ENCODE measurements at regions of chr1 and their contacts with region 1.

Region 1: DNA sequence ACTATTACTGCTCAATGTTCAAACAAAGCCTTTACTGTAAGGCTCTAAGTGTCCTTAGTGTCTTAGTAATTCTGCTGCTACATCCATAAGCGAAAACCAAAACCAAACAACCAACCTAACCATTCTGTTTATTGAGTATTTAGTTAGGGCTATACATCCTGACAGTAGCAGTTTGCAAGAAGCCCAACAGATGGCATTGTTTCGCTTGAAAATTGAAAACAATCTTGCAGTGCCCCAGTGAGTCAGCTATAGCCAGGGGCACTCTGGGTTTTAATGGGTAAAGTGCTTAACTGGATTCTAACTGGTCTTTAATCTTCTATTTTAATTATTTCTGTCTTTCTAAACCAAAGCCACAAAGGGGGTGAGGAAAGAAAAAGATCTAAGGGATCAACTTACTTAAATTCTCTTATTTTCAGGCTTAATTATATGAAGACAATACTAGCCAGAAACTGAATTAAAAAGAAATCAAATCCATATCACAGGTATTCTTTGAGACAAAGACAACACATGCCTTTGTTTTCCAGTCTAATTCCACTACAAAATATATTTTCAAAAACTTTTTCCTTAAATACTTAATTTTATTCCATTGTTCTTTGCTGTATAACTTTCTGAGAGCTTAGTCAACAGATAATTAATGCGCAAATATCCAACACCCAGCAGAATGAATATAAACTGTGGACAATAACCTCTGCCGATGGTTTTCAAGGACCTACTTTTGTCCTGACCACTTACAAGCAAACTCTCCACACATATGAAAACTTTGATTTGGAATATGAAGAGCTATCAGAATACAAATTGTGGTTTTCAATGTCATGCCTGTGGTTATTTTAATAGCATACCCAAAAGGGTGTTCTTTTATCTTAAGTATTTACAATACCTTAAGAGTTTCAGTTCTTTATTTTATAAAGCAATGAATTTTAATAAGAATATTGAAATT is 15.2 kb downstream of the POGZ start:
- DNase-seq: no peak
- ATAC-seq: peak; percentile 86

Region 2: GRCh38 chr1:151277249-151277648 is 166.9 kb before region 1 on chr1:
- intact Hi-C with region 1: no loop called
- DNase-seq: no peak
- ATAC-seq: no peak

Region 3: GRCh38 chr1:151574545-151575529 is 130.7 kb after region 1 on chr1:
- intact Hi-C with region 1: no loop called
- DNase-seq: no peak
- ATAC-seq: peak; percentile 30

Region 4: DNA sequence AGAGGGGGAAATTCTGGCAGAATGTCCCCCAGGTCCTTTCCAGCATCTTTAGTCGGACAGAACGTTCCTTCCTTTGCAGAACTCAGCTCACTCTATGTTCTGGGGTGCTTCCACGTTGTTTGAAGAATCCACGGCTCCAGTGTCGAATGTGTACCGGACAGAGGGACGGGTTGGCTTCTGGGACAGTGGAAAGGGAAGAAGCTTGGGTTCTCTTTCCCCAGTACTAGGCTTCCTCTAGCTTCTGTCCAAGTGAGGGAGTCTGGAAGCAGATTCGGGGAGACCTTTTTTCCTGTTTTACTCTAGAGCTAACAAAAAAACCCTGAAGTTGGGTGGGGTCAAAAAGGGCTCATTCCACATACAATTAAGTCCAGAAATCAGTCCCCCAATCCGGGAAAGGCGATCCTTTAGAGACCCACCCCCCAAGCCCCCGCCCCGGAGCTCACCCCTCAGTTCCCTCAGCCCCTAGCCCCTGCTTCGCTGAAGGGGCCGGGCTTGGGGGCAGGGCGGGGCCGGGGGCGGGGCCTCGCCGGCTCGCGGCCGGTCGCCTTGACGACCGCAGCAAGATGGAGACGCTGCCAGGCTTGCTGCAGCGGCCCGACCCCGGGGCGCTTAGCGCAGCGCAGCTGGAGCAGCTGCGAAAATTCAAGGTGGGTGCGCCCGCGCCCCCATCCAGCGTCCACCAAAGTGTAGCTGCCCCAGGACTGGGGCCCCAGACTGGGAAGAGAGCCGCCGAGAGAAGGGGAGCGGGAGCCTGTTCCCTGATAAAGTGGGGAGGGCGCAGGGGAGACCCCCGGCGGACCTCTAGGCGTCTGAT is 277.1 kb after region 1 on chr1 and contains the start of gene RIIAD1:
- intact Hi-C with region 1: loop called (anchors 10 kb)
- DNase-seq: peak; percentile 65
- ATAC-seq: peak; percentile 84
- total RNA-seq, gene RIIAD1: 4.4 TPM